Activated CD4-positive, alpha-beta T cell treated with anti-CD3 and anti-CD28 coated beads, Interleukin-2, amount 10 ng/mL, durations not matched to agents 24 days and 14 days (primary cell): ENCODE measurements at regions of chr10 and their contacts with region 1.

Region 1: GRCh38 chr10:45249978-45250693 is 65.3 kb downstream of the OR13A1 start:
- DNase-seq: peak; percentile 74
- H3K4me3 Mint-ChIP-seq: peak overlapping the region; percentile 51
- H3K27ac Mint-ChIP-seq: no peak overlapping the region
- H3K4me1 Mint-ChIP-seq: peaks cover 16% of the 10 kb centered on the region
- H3K27me3 Mint-ChIP-seq: peaks cover 20% of the 10 kb centered on the region

Region 2: DNA sequence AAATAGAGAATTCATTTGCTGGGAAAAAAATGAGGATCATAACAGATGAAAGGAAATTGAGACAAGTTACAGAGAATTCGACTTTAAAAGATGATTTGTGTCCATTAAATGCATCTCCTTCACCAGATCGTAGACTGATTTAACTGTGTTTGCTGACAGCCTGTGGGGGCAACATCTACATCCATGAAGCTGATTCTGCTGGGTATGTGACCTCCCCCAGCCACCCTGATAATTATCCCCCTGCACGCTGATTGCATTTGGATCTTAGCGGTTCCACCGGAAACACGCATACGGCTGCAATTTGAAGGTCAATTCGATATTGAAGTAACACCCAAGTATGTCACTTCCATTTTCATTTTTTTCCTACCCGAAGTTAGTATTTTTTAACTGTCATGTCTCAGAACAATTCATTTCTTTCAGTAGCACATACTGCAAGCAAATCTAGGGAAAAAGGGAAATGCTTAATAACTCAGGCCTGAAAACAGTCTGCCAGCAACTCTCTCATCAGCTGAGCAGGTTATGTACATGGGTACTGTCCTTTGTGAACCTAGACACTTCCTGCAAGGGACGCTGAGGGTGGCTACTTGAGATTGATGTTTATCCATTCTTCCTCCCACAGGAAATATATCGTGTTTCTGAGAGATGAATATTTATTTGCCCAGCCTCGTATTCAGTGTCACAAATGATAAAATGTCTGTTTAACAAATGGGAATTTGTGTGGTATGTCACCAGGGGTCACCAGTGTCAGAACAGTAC is 114.5 kb before region 1 on chr10:
- intact Hi-C with region 1: no loop called
- DNase-seq: no peak
- H3K4me3 Mint-ChIP-seq: no peak overlapping the region
- H3K27ac Mint-ChIP-seq: no peak overlapping the region
- H3K4me1 Mint-ChIP-seq: no peaks in the 10 kb centered on the region
- H3K27me3 Mint-ChIP-seq: peaks cover 7% of the 10 kb centered on the region

Region 3: GRCh38 chr10:45373576-45374349 is 123.6 kb after region 1 on chr10 and contains the start of gene ALOX5:
- intact Hi-C with region 1: loop called (anchors 5 kb)
- DNase-seq: peak; percentile 88
- H3K4me3 Mint-ChIP-seq: peak within 1 kb of the TSS; percentile 93
- H3K27ac Mint-ChIP-seq: peak within 1 kb of the TSS; percentile 79
- H3K4me1 Mint-ChIP-seq: peaks cover 28% of the 10 kb centered on the region
- H3K27me3 Mint-ChIP-seq: peaks cover 65% of the 10 kb centered on the region
- total RNA-seq, gene ALOX5: 1.0 and 2.4 TPM in 2 replicates

Region 4: DNA sequence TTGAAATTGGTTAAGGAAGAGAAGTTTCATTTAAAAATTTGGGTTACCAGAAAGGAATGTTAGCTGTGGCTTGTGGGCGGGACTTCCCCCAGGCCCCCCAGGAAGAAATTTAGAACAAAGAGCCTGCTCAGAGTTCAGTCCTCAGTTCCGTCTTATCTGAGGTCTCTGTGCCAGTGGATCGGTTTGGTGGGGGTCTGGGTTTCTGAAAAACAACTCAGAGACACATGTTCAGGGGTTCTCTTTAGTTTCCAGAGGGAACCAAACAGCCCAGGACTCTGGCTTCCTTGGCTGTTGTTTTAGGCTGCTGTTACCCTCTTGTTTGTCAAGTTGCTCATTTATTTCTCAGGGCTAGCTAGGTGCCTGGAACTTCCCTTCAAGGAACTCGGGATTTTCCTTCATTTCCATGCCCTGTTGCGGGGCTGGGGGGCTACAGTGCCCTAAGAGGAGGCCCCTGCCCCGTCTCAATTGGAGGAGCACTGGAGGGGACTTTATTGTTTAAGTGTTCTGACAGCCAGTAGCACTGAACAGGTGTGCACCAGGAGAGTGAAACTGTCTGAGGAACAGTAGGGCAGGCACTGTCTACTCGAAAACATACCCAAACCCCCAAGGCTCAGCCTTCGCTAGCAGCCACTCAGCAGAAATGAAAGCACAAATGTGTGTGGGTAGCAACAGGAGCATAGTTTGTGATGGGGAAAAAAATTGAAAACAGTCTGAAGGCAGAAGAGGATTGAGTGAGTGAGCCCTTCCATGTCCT is 183.8 kb after region 1 on chr10:
- intact Hi-C with region 1: no loop called
- DNase-seq: peak; percentile 71
- H3K4me3 Mint-ChIP-seq: peak overlapping the region; percentile 51
- H3K27ac Mint-ChIP-seq: peak overlapping the region; percentile 58
- H3K4me1 Mint-ChIP-seq: peaks cover 30% of the 10 kb centered on the region
- H3K27me3 Mint-ChIP-seq: peaks cover 2% of the 10 kb centered on the region

Region 5: GRCh38 chr10:45464958-45465567 is 214.9 kb after region 1 on chr10:
- intact Hi-C with region 1: loop called (anchors 5 kb)
- DNase-seq: peak; percentile 92
- H3K4me3 Mint-ChIP-seq: no peak overlapping the region
- H3K27ac Mint-ChIP-seq: no peak overlapping the region
- H3K4me1 Mint-ChIP-seq: peaks cover 39% of the 10 kb centered on the region
- H3K27me3 Mint-ChIP-seq: no peaks in the 10 kb centered on the region